ENCODE measurements at regions of chr13 and their contacts with region 1.

Region 1: DNA sequence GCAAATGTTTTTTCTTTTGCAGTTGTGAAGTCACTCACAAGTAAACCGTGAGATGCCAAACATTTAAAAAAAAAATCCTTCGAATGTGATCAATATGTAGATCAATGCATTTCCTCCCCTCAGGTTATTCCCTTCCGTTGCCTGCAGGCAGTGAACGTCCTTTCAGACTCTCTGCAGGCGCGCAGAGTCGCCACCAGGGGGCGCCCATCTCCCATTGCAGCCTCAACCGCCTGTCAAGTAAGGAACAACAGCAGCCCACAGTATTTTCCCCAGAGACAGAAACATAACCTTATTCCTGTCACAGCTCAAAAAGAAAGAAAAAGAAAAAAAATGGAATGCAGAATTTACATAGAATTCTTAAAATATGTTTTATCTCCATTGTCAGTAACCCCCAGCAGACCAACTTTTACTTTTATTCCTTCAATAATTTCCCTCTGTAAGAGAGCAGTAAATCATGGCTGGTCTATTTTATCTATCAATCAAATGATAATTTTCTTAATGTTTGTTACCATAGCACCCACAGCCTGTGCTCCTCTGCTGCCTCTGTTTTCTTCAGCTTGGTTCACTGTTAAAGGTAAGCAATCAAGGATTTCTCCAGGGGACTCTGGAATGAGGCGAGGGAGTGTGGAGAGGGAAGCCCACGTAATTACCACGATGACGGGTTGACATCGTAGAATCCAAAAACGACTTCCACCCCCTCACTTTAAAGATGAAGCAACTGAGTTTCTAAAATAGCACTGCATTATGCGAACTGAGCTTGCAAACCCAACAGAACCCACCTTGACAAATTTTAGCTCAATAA is 637.6 kb upstream of the ARGLU1 start:
- DNase-seq: peak; percentile 50 to 92 (median 81)

Region 2: GRCh38 chr13:107650081-107650701 is 444.7 kb after region 1 on chr13:
- intact Hi-C with region 1: loop called (anchors 5 kb)
- DNase-seq: peak; percentile 19 to 88 (median 68)

Region 3: DNA sequence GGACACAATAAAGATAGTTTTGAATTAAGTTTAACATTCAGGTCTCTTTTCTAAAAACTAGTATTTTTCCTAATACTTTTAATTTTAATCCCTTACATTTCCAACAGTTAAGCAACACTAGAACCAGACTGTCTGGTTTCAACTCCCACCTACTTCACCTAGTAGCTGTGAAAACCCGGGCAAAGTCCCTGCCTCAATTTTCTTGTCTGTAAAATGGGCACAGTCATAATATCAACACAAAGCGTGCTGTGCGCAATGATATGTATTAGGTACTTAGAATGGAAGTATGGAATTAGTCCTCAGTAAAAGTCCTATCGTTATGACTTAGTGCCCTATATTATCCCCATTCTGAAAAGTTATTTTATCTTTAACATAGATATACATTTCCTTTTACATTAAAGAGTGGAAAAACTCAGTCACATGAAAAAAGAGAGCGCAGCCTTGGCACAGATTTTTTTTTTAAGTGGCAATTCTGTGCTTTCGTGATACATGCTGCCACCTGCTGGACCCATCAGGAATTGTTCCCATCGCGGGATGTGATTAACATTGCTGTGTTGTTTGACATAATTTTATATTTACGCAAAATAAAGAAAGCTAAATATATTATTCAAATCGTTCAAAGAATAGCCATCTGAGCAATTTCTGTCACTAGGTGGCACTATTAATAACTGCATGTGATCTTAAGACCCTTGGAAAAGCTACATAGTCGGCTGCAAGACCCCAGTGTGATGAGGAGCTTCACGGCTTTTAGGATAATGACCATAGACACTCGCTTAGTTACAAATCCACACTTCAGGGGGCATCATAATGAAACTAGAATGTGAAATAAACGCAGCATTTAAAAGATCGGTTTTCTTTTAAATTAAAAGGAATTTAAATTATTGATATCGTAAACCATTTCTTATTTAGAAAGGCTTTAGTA is 949.9 kb after region 1 on chr13:
- intact Hi-C with region 1: loop called (anchors 10 kb)
- DNase-seq: peak in 41 of 42 donors; percentile 6 to 85 (median 68)

Measured in head of caudate nucleus (tissue), 42 donors.